Breast epithelium (tissue), 4 donors: ENCODE measurements at regions of chr2 and their contacts with region 1.

Region 1: GRCh38 chr2:237474931-237475703 is 11.9 kb upstream of the MLPH start:
- DNase-seq: peak; percentile 71 to 84
- H3K4me3 ChIP-seq: peak overlapping the region; percentile 59 to 76 (median 76)
- H3K27ac ChIP-seq: peak overlapping the region; percentile 96 to 97
- H3K4me1 ChIP-seq: peaks cover 7% of the 10 kb centered on the region in 2 donors
- H3K27me3 ChIP-seq: no peaks in the 10 kb centered on the region
- CTCF ChIP-seq: peak; percentile 76 to 86 (median 82)
- POLR2A ChIP-seq: peak; percentile 9

Region 2: GRCh38 chr2:237085248-237086221 is 389.6 kb before region 1 on chr2 and contains the start of gene COPS8:
- intact Hi-C with region 1: loop called (anchors 10 kb)
- DNase-seq: peak; percentile 92 to 94
- H3K4me3 ChIP-seq: peak within 1 kb of the TSS; percentile 63 to 77 (median 73)
- H3K27ac ChIP-seq: peak within 1 kb of the TSS; percentile 88 to 92
- H3K4me1 ChIP-seq: peaks cover 0 to 6% of the 10 kb centered on the region in 2 donors
- H3K27me3 ChIP-seq: no peaks in the 10 kb centered on the region
- CTCF ChIP-seq: peak in 2 of 3 donors; percentile 27 to 49
- POLR2A ChIP-seq: peak; percentile 82
- total RNA-seq, gene COPS8: 88.8 to 205 (median 103) TPM

Region 3: GRCh38 chr2:237421542-237422116 is 53.5 kb before region 1 on chr2:
- intact Hi-C with region 1: loop called (anchors 1 kb)
- DNase-seq: peak; percentile 42 to 72
- H3K4me3 ChIP-seq: peak overlapping the region in 1 of 3 donors; percentile 49
- H3K27ac ChIP-seq: peak overlapping the region; percentile 68 to 88
- H3K4me1 ChIP-seq: peaks cover 0 to 5% of the 10 kb centered on the region in 2 donors
- H3K27me3 ChIP-seq: no peaks in the 10 kb centered on the region
- CTCF ChIP-seq: peak; percentile 43 to 75 (median 64)
- POLR2A ChIP-seq: no peak

Region 4: GRCh38 chr2:237441605-237442274 is 33.4 kb before region 1 on chr2:
- intact Hi-C with region 1: no loop called
- DNase-seq: no peak
- H3K4me3 ChIP-seq: no peak overlapping the region
- H3K27ac ChIP-seq: peak overlapping the region; percentile 62 to 74
- H3K4me1 ChIP-seq: no peaks in the 10 kb centered on the region
- H3K27me3 ChIP-seq: no peaks in the 10 kb centered on the region
- CTCF ChIP-seq: no peak
- POLR2A ChIP-seq: no peak